Activated CD4-positive, alpha-beta T cell treated with anti-CD3 and anti-CD28 coated beads, Interleukin-2, amount 10 ng/mL, durations not matched to agents 24 days and 14 days (primary cell): ENCODE measurements at regions of chr1 and their contacts with region 1.

Region 1: DNA sequence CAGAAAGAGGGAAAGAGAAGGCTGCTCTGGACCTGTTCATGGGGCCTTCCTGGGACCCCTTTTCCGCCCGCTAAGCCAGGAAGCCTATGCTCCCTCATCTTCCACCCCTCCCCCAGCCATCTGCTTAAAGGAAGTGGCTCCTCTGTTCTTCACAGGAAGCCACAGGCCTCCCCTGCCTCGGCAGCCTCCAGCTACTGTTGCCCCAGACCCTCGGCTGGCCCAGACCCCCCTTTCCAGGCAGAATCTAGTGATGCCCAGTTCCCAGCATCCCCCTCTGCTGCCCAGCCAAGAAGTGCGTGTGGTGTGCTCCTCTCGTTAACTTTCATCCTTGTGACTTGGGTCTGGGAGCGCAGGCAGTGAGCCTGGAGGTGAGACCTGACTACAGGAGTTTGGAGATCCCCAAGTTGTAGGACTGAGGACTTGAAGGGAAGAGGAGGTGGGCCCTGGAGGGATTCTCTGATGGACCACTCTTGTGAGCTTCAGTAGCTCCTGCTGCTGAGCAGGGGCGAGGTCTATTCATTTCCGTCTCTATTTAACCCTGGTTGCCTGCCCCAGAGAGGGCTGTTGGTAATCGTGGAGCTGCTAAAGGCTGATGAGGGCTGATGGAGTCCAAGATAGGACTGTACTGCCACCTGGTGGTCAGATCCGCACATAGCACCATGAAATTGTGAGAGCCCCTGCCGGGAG is 9.1 kb downstream of the IFI6 start:
- DNase-seq: peak; percentile 97
- H3K4me3 Mint-ChIP-seq: peak overlapping the region; percentile 80
- H3K27ac Mint-ChIP-seq: peak overlapping the region; percentile 99
- H3K4me1 Mint-ChIP-seq: peaks cover 55% of the 10 kb centered on the region
- H3K27me3 Mint-ChIP-seq: no peaks in the 10 kb centered on the region

Region 2: GRCh38 chr1:27416387-27417111 is 246.3 kb before region 1 on chr1:
- intact Hi-C with region 1: loop called (anchors 1 kb)
- DNase-seq: peak; percentile 87
- H3K4me3 Mint-ChIP-seq: no peak overlapping the region
- H3K27ac Mint-ChIP-seq: peak overlapping the region; percentile 14
- H3K4me1 Mint-ChIP-seq: peaks cover 28% of the 10 kb centered on the region
- H3K27me3 Mint-ChIP-seq: no peaks in the 10 kb centered on the region

Region 3: GRCh38 chr1:27556781-27557595 is 105.9 kb before region 1 on chr1:
- intact Hi-C with region 1: loop called (anchors 1 kb)
- DNase-seq: peak; percentile 92
- H3K4me3 Mint-ChIP-seq: peak overlapping the region; percentile 59
- H3K27ac Mint-ChIP-seq: peak overlapping the region; percentile 81
- H3K4me1 Mint-ChIP-seq: peaks cover 47% of the 10 kb centered on the region
- H3K27me3 Mint-ChIP-seq: no peaks in the 10 kb centered on the region

Region 4: GRCh38 chr1:27603681-27604578 is 58.9 kb before region 1 on chr1 and contains the start of gene AHDC1:
- intact Hi-C with region 1: loop called (anchors 1 kb)
- DNase-seq: peak; percentile 98
- H3K4me3 Mint-ChIP-seq: peak within 1 kb of the TSS; percentile 99
- H3K27ac Mint-ChIP-seq: peak within 1 kb of the TSS; percentile 92
- H3K4me1 Mint-ChIP-seq: peaks cover 43% of the 10 kb centered on the region
- H3K27me3 Mint-ChIP-seq: no peaks in the 10 kb centered on the region
- total RNA-seq, gene AHDC1: 33.9 and 34.7 TPM in 2 replicates

Region 5: DNA sequence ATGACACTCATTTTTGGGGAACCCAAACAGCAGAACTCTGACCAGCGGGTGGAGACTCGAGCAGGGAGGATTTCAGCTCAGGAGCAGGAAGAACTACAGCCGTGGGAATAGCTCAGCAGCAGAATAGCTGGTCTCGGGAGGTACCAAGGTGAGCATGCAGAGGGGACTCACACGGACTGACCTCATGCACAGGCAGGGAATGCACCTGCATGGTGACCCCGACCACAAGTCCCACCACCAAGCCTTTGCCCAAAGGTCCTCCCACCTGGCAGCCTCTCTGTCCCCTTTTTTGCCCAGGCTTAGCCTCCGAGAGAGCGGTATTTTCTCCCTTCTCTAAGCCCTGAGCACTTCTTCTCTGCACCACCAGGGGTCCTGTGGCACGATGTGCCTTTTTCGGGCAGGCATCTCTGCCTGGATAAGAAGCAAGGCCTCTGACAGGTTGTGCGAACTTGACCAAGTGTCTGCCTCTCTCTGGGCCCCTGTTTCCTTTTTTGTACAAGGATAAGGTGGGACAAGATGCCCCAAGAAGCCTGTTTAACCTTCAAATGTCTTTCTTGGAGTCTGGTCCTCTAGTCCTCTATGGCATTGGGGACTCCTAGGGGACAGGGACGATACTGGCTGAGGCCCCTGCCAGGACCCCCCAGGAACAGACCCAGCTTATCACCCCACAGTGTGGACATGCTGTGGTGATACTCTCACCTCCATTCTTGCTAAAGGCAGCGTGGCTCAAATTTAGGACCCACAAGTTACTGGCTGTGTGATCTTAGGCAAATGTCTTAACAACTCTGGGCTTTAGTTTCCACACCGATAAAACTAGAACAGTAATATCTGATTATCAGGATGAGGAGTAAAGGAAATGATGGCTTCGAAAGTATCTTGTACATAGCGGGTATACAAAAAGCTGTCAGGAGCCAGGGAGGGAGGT is 18.9 kb before region 1 on chr1:
- intact Hi-C with region 1: loop called (anchors 1 kb)
- DNase-seq: peak; percentile 91
- H3K4me3 Mint-ChIP-seq: no peak overlapping the region
- H3K27ac Mint-ChIP-seq: peak overlapping the region; percentile 53
- H3K4me1 Mint-ChIP-seq: peaks cover 21% of the 10 kb centered on the region
- H3K27me3 Mint-ChIP-seq: no peaks in the 10 kb centered on the region

Region 6: DNA sequence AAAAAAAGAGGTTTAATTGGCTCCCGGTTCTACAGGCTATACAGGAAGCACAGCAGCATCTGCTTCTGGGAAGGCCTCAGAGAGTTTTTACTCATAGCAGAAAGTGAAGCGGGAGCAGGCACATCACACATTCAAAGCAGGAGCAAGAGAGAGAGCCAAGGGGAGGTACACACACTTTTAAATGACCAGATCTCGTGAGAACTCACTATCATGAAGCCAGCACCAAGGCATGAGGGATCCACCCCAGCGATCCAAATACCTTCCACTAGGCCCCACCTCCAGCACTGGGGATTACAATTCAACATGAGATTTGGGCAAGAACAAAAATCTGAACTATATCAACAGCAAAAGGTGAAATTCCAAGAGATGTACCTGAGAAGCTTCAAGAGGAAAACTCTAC is 42.1 kb after region 1 on chr1:
- intact Hi-C with region 1: no loop called
- DNase-seq: no peak
- H3K4me3 Mint-ChIP-seq: no peak overlapping the region
- H3K27ac Mint-ChIP-seq: no peak overlapping the region
- H3K4me1 Mint-ChIP-seq: no peaks in the 10 kb centered on the region
- H3K27me3 Mint-ChIP-seq: peaks cover 20% of the 10 kb centered on the region